CD4-positive, alpha-beta memory T cell (primary cell): ENCODE measurements at regions of chr1 and their contacts with region 1.

Region 1: GRCh38 chr1:33295450-33296081 is 25.3 kb downstream of the A3GALT2 start:
- DNase-seq: peak; percentile 76 to 83 (median 80)
- H3K4me3 ChIP-seq: no peak overlapping the region
- H3K4me3 Mint-ChIP-seq: no peak overlapping the region
- H3K27ac ChIP-seq: no peak overlapping the region
- H3K27ac Mint-ChIP-seq: peak overlapping the region in 3 of 7 donors; percentile 41 to 72 (median 52)
- H3K4me1 ChIP-seq: peaks cover 12% of the 10 kb centered on the region
- H3K4me1 Mint-ChIP-seq: peaks cover 7 to 22% (median 12%) of the 10 kb centered on the region in 4 donors
- H3K27me3 ChIP-seq: no peaks in the 10 kb centered on the region
- H3K27me3 Mint-ChIP-seq: no peaks in the 10 kb centered on the region

Region 2: DNA sequence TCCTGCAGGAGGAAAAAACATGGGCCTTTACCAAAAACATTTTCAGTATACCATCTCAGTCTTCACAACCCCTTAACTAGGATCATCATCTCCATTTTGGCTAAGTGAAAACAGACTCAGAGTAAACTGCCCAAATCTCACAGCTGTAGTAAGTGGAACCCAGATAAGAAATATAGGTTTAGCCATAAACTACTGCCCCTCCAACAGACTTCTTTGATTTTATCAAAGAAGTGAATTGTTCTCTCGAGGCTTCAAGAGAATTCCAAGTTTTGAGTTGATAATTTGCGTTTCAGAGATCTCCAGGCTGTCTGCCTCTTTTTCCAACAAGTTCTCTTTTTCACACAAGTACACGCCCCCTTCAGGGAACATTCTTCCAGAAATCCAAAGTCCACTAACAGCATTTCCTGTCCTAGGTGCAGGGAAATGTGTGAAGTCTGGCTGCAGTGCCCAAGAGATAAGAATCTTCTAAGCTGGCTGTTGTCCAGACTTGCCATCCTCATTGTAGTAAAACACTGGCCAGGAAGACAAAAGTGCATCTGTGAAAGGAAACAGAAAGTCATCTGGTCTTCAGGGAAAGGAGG is 361.7 kb before region 1 on chr1:
- CTCF ChIA-PET with region 1: no interaction called
- POLR2A ChIA-PET with region 1: no interaction called
- intact Hi-C with region 1: loop called (anchors 5 kb)
- DNase-seq: no peak
- H3K4me3 ChIP-seq: no peak overlapping the region
- H3K4me3 Mint-ChIP-seq: no peak overlapping the region
- H3K27ac ChIP-seq: no peak overlapping the region
- H3K27ac Mint-ChIP-seq: peak overlapping the region in 3 of 7 donors; percentile 43 to 91 (median 61)
- H3K4me1 ChIP-seq: no peaks in the 10 kb centered on the region
- H3K4me1 Mint-ChIP-seq: peaks cover 0 to 4% (median 0%) of the 10 kb centered on the region in 4 donors
- H3K27me3 ChIP-seq: no peaks in the 10 kb centered on the region
- H3K27me3 Mint-ChIP-seq: no peaks in the 10 kb centered on the region

Region 3: DNA sequence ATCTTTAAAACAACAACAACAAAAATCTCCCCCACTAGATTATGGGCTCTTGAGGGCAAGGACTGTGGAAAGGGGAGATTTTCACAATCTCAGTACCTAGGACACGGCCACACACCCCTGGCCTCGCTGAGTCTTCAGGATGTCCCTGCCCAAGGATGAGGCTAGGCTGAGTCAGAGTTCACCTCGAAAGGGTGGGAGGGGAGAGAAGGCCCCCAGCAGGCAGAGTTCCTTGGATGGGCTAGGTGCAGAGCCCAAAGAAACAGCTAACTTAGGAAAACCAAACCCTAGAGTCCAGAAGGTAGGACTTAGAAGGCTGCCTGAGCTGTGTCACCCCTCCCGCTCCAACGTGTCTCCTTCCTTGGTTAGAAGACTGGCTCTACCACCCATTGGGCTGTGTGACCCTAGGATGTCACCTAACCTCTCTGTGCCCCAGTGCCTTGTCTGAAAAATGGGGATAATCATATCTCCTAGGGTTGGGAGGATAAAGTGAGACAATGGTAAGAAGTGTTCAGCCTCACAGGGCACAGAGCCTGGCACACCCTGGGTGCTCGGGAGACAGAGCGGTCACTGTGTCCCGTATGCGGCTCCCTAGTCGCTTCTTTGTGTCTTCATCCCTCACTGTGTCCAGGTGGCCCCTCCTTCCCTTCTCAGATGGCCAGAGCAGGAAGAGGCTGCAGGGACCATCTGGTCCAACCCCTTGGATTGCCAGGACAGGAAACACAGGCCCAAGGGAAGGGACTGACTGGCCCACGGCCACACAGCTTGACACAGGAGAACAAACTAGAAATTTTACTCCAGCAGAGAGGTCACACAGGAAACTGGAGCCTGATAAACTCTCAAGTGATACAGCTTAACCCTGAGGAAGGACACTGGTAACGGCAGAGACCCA is 124.9 kb before region 1 on chr1:
- CTCF ChIA-PET with region 1: no interaction called
- POLR2A ChIA-PET with region 1: no interaction called
- intact Hi-C with region 1: no loop called
- DNase-seq: no peak
- H3K4me3 ChIP-seq: no peak overlapping the region
- H3K4me3 Mint-ChIP-seq: no peak overlapping the region
- H3K27ac ChIP-seq: no peak overlapping the region
- H3K27ac Mint-ChIP-seq: peak overlapping the region in 3 of 7 donors; percentile 25 to 46 (median 35)
- H3K4me1 ChIP-seq: peaks cover 7% of the 10 kb centered on the region
- H3K4me1 Mint-ChIP-seq: peaks cover 10 to 35% (median 18%) of the 10 kb centered on the region in 4 donors
- H3K27me3 ChIP-seq: no peaks in the 10 kb centered on the region
- H3K27me3 Mint-ChIP-seq: no peaks in the 10 kb centered on the region

Region 4: GRCh38 chr1:33284049-33284448 is 11.5 kb before region 1 on chr1:
- CTCF ChIA-PET with region 1: interaction called, 10 read pairs
- POLR2A ChIA-PET with region 1: no interaction called
- intact Hi-C with region 1: no loop called
- DNase-seq: no peak
- H3K4me3 ChIP-seq: no peak overlapping the region
- H3K4me3 Mint-ChIP-seq: no peak overlapping the region
- H3K27ac ChIP-seq: no peak overlapping the region
- H3K27ac Mint-ChIP-seq: peak overlapping the region in 1 of 7 donors; percentile 20
- H3K4me1 ChIP-seq: no peaks in the 10 kb centered on the region
- H3K4me1 Mint-ChIP-seq: peaks cover 0 to 5% (median under 1%) of the 10 kb centered on the region in 4 donors
- H3K27me3 ChIP-seq: no peaks in the 10 kb centered on the region
- H3K27me3 Mint-ChIP-seq: no peaks in the 10 kb centered on the region

Region 5: DNA sequence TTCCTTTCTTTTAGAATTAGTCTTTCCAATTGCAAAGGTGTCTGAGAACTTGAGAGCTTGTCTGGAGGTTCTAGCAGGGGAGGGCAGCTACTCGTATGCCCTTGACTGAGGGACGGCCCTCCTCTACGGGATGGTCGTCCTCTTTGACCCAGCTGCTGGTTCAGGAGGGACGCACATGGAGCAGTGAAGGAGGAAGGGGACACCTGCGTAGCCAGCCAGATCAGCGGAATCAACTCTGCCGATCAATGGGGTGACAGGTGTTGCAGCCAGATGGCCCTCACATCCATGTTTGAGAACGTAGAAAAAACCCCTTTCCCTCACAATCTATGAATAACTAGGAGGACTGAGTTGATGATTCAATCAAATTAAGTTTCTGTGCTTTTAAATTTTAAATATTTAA is 41.0 kb after region 1 on chr1:
- CTCF ChIA-PET with region 1: interaction called, 15 read pairs
- POLR2A ChIA-PET with region 1: no interaction called
- intact Hi-C with region 1: no loop called
- DNase-seq: no peak
- H3K4me3 ChIP-seq: no peak overlapping the region
- H3K4me3 Mint-ChIP-seq: no peak overlapping the region
- H3K27ac ChIP-seq: no peak overlapping the region
- H3K27ac Mint-ChIP-seq: peak overlapping the region in 1 of 7 donors; percentile 61
- H3K4me1 ChIP-seq: peaks cover 16% of the 10 kb centered on the region
- H3K4me1 Mint-ChIP-seq: peaks cover 23 to 53% (median 28%) of the 10 kb centered on the region in 4 donors
- H3K27me3 ChIP-seq: no peaks in the 10 kb centered on the region
- H3K27me3 Mint-ChIP-seq: no peaks in the 10 kb centered on the region

Region 6: GRCh38 chr1:33367485-33368405 is 72.2 kb after region 1 on chr1:
- CTCF ChIA-PET with region 1: interaction called, 179 read pairs
- POLR2A ChIA-PET with region 1: interaction called, 3 read pairs
- intact Hi-C with region 1: loop called (anchors 1 kb)
- DNase-seq: peak; percentile 78 to 83 (median 79)
- H3K4me3 ChIP-seq: no peak overlapping the region
- H3K4me3 Mint-ChIP-seq: no peak overlapping the region
- H3K27ac ChIP-seq: no peak overlapping the region
- H3K27ac Mint-ChIP-seq: no peak overlapping the region
- H3K4me1 ChIP-seq: no peaks in the 10 kb centered on the region
- H3K4me1 Mint-ChIP-seq: peaks cover 0 to 5% (median 1%) of the 10 kb centered on the region in 4 donors
- H3K27me3 ChIP-seq: no peaks in the 10 kb centered on the region
- H3K27me3 Mint-ChIP-seq: no peaks in the 10 kb centered on the region

Region 7: GRCh38 chr1:33472349-33472980 is 176.9 kb after region 1 on chr1 and contains the start of gene ZSCAN20:
- CTCF ChIA-PET with region 1: interaction called, 46 read pairs
- POLR2A ChIA-PET with region 1: no interaction called
- intact Hi-C with region 1: loop called (anchors 1 kb)
- DNase-seq: peak; percentile 76 to 81 (median 77)
- H3K4me3 ChIP-seq: peak within 1 kb of the TSS; percentile 43 to 66
- H3K4me3 Mint-ChIP-seq: peak within 1 kb of the TSS; percentile 87 to 99 (median 93)
- H3K27ac ChIP-seq: peak within 1 kb of the TSS; percentile 53
- H3K27ac Mint-ChIP-seq: peak within 1 kb of the TSS; percentile 72 to 96 (median 89)
- H3K4me1 ChIP-seq: peaks cover 17% of the 10 kb centered on the region
- H3K4me1 Mint-ChIP-seq: peaks cover 19 to 34% (median 27%) of the 10 kb centered on the region in 4 donors
- H3K27me3 ChIP-seq: no peaks in the 10 kb centered on the region
- H3K27me3 Mint-ChIP-seq: no peaks in the 10 kb centered on the region
- total RNA-seq, gene ZSCAN20: 3.8 to 3.9 TPM